CD4-positive, alpha-beta T cell (primary cell): ENCODE measurements at regions of chr1 and their contacts with region 1.

Region 1: DNA sequence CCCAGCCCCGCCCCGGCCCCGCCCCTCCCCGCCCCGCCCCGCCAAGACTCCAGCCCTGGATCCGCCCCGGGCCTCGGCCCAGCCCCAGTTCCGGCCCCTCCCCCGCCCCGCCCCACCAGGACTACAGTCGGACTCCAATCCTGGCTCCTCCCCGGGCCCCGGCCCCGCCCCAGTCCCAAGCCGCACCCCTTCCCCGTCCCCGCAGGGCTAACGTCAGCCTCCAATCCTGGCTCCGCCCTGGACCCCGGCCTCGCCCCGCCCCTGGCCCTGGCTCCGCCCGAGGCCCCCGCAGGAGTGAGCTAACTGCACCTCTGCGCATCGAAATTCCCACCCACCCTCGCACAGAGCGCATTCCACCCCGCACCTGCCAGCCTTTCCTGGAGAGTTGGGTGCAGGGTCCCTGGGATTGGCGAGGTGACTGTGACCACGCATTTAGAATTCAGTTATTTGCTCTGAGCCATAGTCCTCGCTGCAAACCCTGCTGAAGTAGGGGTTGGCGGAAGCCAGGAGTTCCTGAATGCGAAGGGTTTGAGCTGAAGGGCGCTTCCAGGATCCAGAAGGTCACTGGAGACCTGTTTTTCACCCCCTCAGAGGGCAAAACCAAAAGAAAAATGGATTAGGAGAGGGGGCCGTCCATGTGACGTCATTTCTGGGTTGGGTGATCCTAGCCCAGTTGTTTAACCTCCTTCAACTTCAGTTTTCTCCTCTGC is 588 bp upstream of the IGSF8 start:
- DNase-seq: peak; percentile 97 to 100 (median 99)
- ATAC-seq: peak; percentile 87
- H3K4me3 ChIP-seq: peak overlapping the region; percentile 61
- H3K4me3 Mint-ChIP-seq: peak overlapping the region; percentile 87
- H3K27ac ChIP-seq: peak overlapping the region; percentile 93
- H3K27ac Mint-ChIP-seq: peak overlapping the region; percentile 88
- H3K4me1 ChIP-seq: peaks cover 66% of the 10 kb centered on the region
- H3K4me1 Mint-ChIP-seq: peaks cover 74% of the 10 kb centered on the region
- H3K27me3 ChIP-seq: no peaks in the 10 kb centered on the region
- H3K27me3 Mint-ChIP-seq: no peaks in the 10 kb centered on the region
- CTCF ChIP-seq: no peak

Region 2: GRCh38 chr1:159780583-159781582 is 318.1 kb before region 1 on chr1 and contains the start of gene DUSP23:
- CTCF ChIA-PET with region 1: no interaction called
- POLR2A ChIA-PET with region 1: no interaction called
- intact Hi-C with region 1: loop called in 1 of 2 experiments (anchors 5 kb)
- DNase-seq: peak; percentile 90 to 98 (median 96)
- ATAC-seq: peak; percentile 95
- H3K4me3 ChIP-seq: peak within 1 kb of the TSS; percentile 66
- H3K4me3 Mint-ChIP-seq: peak within 1 kb of the TSS; percentile 92
- H3K27ac ChIP-seq: peak within 1 kb of the TSS; percentile 35 to 45
- H3K27ac Mint-ChIP-seq: peak within 1 kb of the TSS; percentile 73
- H3K4me1 ChIP-seq: peaks cover 20% of the 10 kb centered on the region
- H3K4me1 Mint-ChIP-seq: peaks cover 24% of the 10 kb centered on the region
- H3K27me3 ChIP-seq: no peaks in the 10 kb centered on the region
- H3K27me3 Mint-ChIP-seq: no peaks in the 10 kb centered on the region
- CTCF ChIP-seq: peak; percentile 83
- total RNA-seq, gene DUSP23: 3.9 to 6.0 TPM

Region 3: DNA sequence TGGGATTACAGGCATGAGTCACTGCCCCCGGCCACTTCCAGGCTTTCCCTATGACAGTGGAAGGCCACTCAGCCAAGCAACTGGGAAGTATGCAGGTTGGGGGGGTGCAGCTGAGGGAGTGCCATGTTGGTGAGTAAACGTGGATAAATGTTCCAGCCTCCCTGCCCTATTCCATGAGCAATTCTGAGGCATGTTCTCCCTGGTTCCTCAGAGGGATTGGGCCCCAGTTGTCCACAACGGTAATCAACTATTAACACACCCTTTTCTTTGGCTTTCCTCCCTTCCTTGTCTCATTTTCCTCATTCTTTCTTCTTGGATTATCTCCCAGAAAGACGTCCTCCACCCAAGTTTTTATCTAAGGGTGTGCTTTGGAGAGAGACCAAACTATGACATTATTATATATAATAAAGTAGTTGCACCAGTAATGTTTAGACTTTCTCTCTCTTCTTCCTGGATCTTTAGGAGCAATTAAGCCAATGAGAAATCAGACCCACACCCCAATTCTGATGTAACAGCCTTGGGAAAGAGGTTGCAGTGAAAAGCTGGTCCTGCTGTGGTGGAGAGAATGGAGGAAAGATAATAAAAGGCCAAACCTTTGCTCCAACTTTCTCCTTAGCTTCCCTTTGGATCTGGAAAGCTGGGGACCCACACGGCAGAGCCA is 138.2 kb before region 1 on chr1:
- CTCF ChIA-PET with region 1: no interaction called
- POLR2A ChIA-PET with region 1: no interaction called
- intact Hi-C with region 1: no loop called
- DNase-seq: no peak
- ATAC-seq: no peak
- H3K4me3 ChIP-seq: no peak overlapping the region
- H3K4me3 Mint-ChIP-seq: no peak overlapping the region
- H3K27ac ChIP-seq: no peak overlapping the region
- H3K27ac Mint-ChIP-seq: no peak overlapping the region
- H3K4me1 ChIP-seq: no peaks in the 10 kb centered on the region
- H3K4me1 Mint-ChIP-seq: no peaks in the 10 kb centered on the region
- H3K27me3 ChIP-seq: peaks cover 0 to 4% of the 10 kb centered on the region in 2 experiments
- H3K27me3 Mint-ChIP-seq: peaks cover 9% of the 10 kb centered on the region
- CTCF ChIP-seq: no peak

Region 4: DNA sequence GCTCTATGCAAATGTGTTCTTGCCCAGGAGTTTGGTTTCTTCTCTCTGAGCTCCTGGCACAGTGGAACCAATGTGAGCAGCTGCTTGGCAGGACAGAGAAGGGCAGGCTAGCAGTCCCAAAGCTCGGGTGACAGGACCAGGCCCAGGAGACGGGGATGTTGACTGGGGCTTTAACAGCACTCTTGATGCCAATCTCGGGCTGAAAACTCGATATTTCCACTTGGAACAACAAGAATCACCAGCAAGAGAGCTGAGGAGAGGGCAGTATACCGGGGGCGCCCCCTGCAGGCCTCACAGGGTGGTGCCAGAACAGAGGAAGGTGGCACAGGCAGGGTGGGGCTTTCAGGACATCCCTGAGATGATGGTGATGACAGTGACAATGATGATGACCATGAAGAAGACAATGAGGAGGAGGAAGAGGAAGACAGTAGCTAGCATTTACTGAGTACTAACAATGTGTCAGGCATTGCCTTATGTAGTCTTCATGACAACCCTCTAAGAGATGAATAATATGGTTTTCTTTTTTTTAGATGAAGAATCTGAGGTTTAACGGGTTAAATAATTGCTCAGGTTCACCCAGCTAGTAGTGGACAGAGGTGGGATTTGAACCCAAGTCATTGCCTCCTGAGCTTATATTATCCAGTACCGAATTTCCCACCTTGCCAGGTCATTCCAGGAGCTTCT is 20.4 kb before region 1 on chr1:
- CTCF ChIA-PET with region 1: interaction called, 30 read pairs
- POLR2A ChIA-PET with region 1: interaction called, 11 read pairs
- intact Hi-C with region 1: no loop called
- DNase-seq: peak in 12 of 14 experiments; percentile 33 to 75 (median 52)
- ATAC-seq: peak; percentile 90
- H3K4me3 ChIP-seq: no peak overlapping the region
- H3K4me3 Mint-ChIP-seq: no peak overlapping the region
- H3K27ac ChIP-seq: no peak overlapping the region
- H3K27ac Mint-ChIP-seq: no peak overlapping the region
- H3K4me1 ChIP-seq: peaks cover 4% of the 10 kb centered on the region
- H3K4me1 Mint-ChIP-seq: no peaks in the 10 kb centered on the region
- H3K27me3 ChIP-seq: peaks cover 45 to 60% of the 10 kb centered on the region in 2 experiments
- H3K27me3 Mint-ChIP-seq: peaks cover 84% of the 10 kb centered on the region
- CTCF ChIP-seq: peak; percentile 75

Region 5: DNA sequence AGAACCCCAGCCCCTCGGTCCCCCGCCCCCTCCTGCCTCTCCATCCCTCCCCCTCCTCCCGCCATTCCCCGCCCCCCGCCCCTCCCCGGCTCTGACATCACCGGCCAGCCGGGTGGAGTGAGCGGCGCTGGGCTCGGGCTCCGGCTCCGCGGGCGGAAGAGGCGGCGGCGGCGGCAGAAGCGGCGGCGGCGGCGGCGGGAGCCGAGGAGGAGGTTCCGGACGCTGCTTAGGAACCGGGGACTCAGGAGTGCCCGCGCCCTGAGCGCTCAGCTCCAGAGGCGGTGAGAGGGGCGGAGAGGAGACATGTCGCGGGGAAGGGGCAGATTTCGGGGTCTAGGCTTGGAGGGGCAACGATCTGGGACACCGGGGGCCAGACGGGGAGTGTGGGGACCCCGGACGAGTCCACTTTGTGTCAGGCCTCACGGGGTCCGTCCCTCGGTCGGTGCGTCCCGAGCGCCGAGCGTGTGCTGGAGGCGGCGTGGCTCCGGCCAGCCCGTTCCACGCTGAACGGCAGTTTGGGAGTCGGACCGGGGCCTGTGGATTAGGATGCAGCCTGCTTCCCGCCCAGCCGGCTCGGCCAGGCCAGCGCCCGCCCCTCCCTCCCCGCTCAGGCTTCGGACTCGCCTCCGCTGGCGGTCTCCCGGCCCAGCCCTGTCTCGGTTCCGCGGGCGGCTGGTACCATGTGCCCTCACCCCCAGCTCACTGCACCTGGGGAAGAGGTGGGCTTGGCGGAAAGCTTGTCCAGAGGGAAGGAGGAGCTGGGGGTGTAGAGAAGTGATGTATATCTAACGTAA is 106.4 kb after region 1 on chr1 and contains the start of gene PEA15:
- CTCF ChIA-PET with region 1: interaction called, 3 read pairs
- POLR2A ChIA-PET with region 1: no interaction called
- intact Hi-C with region 1: loop called in 1 of 2 experiments (anchors 5 kb)
- DNase-seq: peak; percentile 30 to 85 (median 66)
- ATAC-seq: peak; percentile 80
- H3K4me3 ChIP-seq: peak within 1 kb of the TSS; percentile 97
- H3K4me3 Mint-ChIP-seq: peak within 1 kb of the TSS; percentile 93
- H3K27ac ChIP-seq: peak within 1 kb of the TSS; percentile 33 to 71
- H3K27ac Mint-ChIP-seq: peak within 1 kb of the TSS; percentile 76
- H3K4me1 ChIP-seq: peaks cover 42% of the 10 kb centered on the region
- H3K4me1 Mint-ChIP-seq: peaks cover 42% of the 10 kb centered on the region
- H3K27me3 ChIP-seq: no peaks in the 10 kb centered on the region
- H3K27me3 Mint-ChIP-seq: no peaks in the 10 kb centered on the region
- CTCF ChIP-seq: no peak
- total RNA-seq, gene PEA15: 9.4 to 10.3 TPM

Region 6: GRCh38 chr1:160284782-160285344 is 185.9 kb after region 1 on chr1 and contains the start of gene PEX19:
- CTCF ChIA-PET with region 1: interaction called, 5 read pairs
- POLR2A ChIA-PET with region 1: interaction called, 6 read pairs
- intact Hi-C with region 1: loop called in 1 of 2 experiments (anchors 1 kb)
- DNase-seq: peak; percentile 90 to 96 (median 92)
- ATAC-seq: peak; percentile 100
- H3K4me3 ChIP-seq: peak within 1 kb of the TSS; percentile 94
- H3K4me3 Mint-ChIP-seq: peak within 1 kb of the TSS; percentile 99
- H3K27ac ChIP-seq: peak within 1 kb of the TSS; percentile 37 to 60
- H3K27ac Mint-ChIP-seq: peak within 1 kb of the TSS; percentile 87
- H3K4me1 ChIP-seq: peaks cover 23% of the 10 kb centered on the region
- H3K4me1 Mint-ChIP-seq: peaks cover 35% of the 10 kb centered on the region
- H3K27me3 ChIP-seq: no peaks in the 10 kb centered on the region
- H3K27me3 Mint-ChIP-seq: no peaks in the 10 kb centered on the region
- CTCF ChIP-seq: no peak
- total RNA-seq, gene PEX19: 32.0 to 33.4 TPM

Region 7: DNA sequence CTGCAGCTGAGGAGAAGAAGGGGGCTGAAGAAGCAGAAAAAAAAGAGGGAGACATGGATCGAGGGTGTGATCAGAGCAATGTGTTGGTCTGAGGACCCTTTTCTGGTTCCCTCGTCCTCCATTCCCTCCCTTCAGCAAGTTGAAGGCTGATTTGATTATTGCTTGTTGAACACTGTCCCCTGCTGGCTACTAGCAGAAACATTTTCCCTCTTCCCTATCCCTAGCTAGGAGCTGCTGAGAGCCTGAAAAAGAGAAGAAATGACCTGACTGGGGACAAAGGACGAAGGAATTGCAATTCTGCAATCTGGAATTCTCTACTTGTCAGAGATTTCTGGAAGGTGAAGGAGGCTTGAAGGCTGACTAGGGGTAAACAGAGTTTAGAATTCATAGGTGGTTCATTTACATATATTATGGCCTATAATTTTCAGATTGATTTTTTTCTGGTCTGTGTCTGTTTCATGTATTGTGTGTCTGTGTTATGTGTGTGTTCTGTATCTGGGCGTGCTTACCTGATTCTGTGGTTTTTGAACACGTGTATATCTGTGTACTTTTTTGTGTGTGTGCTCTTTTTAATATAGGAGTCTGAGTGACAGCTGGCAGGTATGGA is 277.6 kb after region 1 on chr1:
- CTCF ChIA-PET with region 1: interaction called, 5 read pairs
- POLR2A ChIA-PET with region 1: interaction called, 5 read pairs
- intact Hi-C with region 1: loop called (anchors 5 to 10 kb)
- DNase-seq: peak in 4 of 14 experiments; percentile 37 to 74 (median 69)
- ATAC-seq: peak; percentile 80
- H3K4me3 ChIP-seq: no peak overlapping the region
- H3K4me3 Mint-ChIP-seq: no peak overlapping the region
- H3K27ac ChIP-seq: no peak overlapping the region
- H3K27ac Mint-ChIP-seq: no peak overlapping the region
- H3K4me1 ChIP-seq: peaks cover 12% of the 10 kb centered on the region
- H3K4me1 Mint-ChIP-seq: peaks cover 13% of the 10 kb centered on the region
- H3K27me3 ChIP-seq: no peaks in the 10 kb centered on the region
- H3K27me3 Mint-ChIP-seq: no peaks in the 10 kb centered on the region
- CTCF ChIP-seq: peak; percentile 87